Activated CD8-positive, alpha-beta T cell treated with anti-CD3 and anti-CD28 coated beads for 36 hours (primary cell): ENCODE measurements at regions of chr4 and their contacts with region 1.

Region 1: GRCh38 chr4:118836301-118837120 is 585 bp upstream of the SEC24D start:
- DNase-seq: peak; percentile 69
- ATAC-seq: peak; percentile 70
- H3K4me3 Mint-ChIP-seq: peak overlapping the region; percentile 87
- H3K27ac Mint-ChIP-seq: peak overlapping the region; percentile 96
- H3K4me1 Mint-ChIP-seq: peaks cover 18% of the 10 kb centered on the region
- H3K27me3 Mint-ChIP-seq: no peaks in the 10 kb centered on the region
- CTCF ChIP-seq: no peak

Region 2: DNA sequence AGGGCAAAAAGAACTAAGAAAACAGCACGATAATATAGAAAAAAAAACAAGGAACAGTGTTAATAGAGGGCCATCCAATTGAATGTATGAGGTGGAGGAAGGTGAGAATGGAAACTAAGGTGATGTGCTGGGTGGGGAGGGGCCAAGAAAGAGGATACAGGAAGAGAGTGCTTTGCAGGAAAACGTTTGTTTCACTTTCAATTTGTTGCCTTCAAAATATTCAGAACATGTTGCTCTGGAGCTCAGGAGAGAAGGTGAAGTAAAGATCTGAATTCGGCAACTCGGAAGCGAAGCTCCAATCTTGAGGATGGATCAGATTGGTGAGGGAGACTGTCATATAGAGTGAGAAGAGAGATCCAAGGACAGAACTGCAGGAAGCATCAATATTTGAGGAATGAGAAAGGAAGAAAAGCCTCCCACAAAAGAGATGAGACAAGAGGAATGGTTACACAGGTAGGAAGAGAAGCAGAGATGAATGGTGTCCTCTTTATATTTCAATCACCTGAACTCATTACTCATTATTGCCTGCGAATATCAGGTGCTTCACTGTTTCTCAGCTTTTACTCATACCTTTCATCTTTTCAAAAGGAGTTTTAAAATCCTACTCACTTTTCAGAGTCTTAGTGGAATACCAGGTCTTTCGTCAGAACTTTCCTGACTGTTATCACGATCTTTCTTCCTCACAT is 14.1 kb after region 1 on chr4:
- CTCF ChIA-PET with region 1: interaction called, 17 read pairs
- POLR2A ChIA-PET with region 1: interaction called, 7 read pairs
- intact Hi-C with region 1: no loop called
- DNase-seq: peak; percentile 48
- ATAC-seq: peak; percentile 93
- H3K4me3 Mint-ChIP-seq: peak overlapping the region; percentile 82
- H3K27ac Mint-ChIP-seq: peak overlapping the region; percentile 83
- H3K4me1 Mint-ChIP-seq: peaks cover 22% of the 10 kb centered on the region
- H3K27me3 Mint-ChIP-seq: peaks cover 5% of the 10 kb centered on the region
- CTCF ChIP-seq: no peak

Region 3: DNA sequence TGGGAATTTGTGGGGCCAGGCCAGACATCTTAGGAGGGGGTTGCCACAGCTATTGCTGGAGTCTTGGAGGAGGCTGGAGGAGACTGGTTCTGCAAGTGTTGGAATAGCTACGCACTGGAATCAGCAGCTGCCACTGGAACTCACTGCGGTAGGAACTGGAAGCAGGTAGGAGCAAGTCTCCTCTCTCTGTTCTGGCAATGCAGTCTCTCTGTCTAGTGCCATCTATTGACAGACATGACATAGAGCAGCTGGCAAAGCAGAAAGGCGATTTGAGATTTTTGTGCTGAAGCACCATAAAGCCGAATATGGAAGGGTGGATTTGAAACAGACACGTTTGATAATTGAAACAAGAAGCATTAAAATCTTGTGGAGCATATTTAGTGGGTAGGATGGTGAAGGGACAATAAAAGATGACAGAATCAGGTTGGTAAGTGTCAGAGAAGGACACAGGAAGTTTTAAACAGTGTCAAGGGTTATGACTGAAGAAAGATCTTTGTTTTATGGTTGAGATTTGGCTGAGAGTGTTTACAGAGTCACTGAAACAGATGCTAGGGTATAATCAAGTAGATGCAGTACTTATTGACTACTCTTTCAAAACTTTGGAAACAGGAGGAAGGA is 28.7 kb after region 1 on chr4:
- CTCF ChIA-PET with region 1: interaction called, 14 read pairs
- POLR2A ChIA-PET with region 1: no interaction called
- intact Hi-C with region 1: no loop called
- DNase-seq: peak; percentile 13
- ATAC-seq: peak; percentile 37
- H3K4me3 Mint-ChIP-seq: no peak overlapping the region
- H3K27ac Mint-ChIP-seq: no peak overlapping the region
- H3K4me1 Mint-ChIP-seq: peaks cover 6% of the 10 kb centered on the region
- H3K27me3 Mint-ChIP-seq: no peaks in the 10 kb centered on the region
- CTCF ChIP-seq: peak; percentile 62